ENCODE measurements at regions of chr16 and their contacts with region 1.

Region 1: GRCh38 chr16:11797166-11797956 is at the start of gene ZC3H7A:
- DNase-seq: peak; percentile 88 to 95 (median 92)
- ATAC-seq: peak; percentile 94 to 97
- H3K4me3 Mint-ChIP-seq: peak within 1 kb of the TSS; percentile 92 to 98 (median 95)
- H3K27ac Mint-ChIP-seq: peak within 1 kb of the TSS; percentile 94 to 100 (median 98)
- H3K4me1 Mint-ChIP-seq: peaks cover 40 to 78% (median 75%) of the 10 kb centered on the region in 4 donors
- H3K27me3 Mint-ChIP-seq: no peaks in the 10 kb centered on the region
- polyA plus RNA-seq, gene ZC3H7A: 29.7 to 35.1 (median 32.3) TPM

Region 2: GRCh38 chr16:11742539-11743307 is 54.6 kb before region 1 on chr16 and contains the start of gene TXNDC11:
- POLR2A ChIA-PET with region 1: interaction called, 60 read pairs
- DNase-seq: peak; percentile 98 to 100 (median 99)
- ATAC-seq: peak; percentile 91 to 92
- H3K4me3 Mint-ChIP-seq: peak within 1 kb of the TSS; percentile 90 to 96 (median 94)
- H3K27ac Mint-ChIP-seq: peak within 1 kb of the TSS; percentile 90 to 99 (median 98)
- H3K4me1 Mint-ChIP-seq: peaks cover 27 to 57% (median 52%) of the 10 kb centered on the region in 4 donors
- H3K27me3 Mint-ChIP-seq: no peaks in the 10 kb centered on the region
- polyA plus RNA-seq, gene TXNDC11: 31.8 to 46.8 (median 35.4) TPM

Region 3: DNA sequence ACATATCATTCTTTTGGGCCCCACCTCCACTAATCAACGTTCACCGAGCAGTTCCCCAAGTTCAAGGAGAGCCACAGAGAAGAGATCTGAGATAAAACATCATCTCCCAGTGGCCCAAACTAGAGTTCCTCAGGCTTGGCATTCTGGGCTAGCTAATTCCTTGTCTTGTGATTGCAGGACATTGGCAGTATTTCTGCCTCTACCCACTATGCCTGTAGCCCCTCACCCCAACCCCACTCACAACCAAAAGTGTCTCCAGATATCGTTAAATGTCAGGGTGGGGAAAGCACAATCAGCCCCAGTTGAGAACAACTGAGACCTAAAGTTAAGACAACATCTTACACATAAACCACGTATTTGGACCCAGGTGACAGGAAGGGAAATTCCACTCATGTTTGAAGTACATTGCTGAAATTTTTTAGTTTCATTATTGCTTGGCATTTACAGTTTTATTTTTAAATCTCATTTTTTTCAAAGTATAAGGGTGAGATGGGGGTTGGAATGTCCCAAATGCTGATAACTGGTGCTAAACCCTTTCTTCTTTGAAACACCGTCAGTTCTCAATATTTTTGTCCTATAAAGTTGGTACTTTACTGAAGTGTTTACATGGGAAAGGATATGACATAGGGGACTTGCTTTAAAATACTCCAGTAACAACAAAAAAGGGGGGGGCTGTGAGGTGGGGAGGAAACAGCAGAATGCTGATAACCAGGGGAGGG is 13.9 kb before region 1 on chr16:
- POLR2A ChIA-PET with region 1: interaction called, 47 read pairs
- DNase-seq: peak in 9 of 10 donors; percentile 21 to 84 (median 66)
- ATAC-seq: peak; percentile 87 to 91
- H3K4me3 Mint-ChIP-seq: peak overlapping the region; percentile 68 to 87 (median 82)
- H3K27ac Mint-ChIP-seq: peak overlapping the region; percentile 94 to 99 (median 98)
- H3K4me1 Mint-ChIP-seq: peaks cover 24 to 65% (median 55%) of the 10 kb centered on the region in 4 donors
- H3K27me3 Mint-ChIP-seq: no peaks in the 10 kb centered on the region

Measured in naive thymus-derived CD8-positive, alpha-beta T cell (primary cell).